WTC11 (cell line): ENCODE measurements at regions of chr5 and their contacts with region 1.

Region 1: DNA sequence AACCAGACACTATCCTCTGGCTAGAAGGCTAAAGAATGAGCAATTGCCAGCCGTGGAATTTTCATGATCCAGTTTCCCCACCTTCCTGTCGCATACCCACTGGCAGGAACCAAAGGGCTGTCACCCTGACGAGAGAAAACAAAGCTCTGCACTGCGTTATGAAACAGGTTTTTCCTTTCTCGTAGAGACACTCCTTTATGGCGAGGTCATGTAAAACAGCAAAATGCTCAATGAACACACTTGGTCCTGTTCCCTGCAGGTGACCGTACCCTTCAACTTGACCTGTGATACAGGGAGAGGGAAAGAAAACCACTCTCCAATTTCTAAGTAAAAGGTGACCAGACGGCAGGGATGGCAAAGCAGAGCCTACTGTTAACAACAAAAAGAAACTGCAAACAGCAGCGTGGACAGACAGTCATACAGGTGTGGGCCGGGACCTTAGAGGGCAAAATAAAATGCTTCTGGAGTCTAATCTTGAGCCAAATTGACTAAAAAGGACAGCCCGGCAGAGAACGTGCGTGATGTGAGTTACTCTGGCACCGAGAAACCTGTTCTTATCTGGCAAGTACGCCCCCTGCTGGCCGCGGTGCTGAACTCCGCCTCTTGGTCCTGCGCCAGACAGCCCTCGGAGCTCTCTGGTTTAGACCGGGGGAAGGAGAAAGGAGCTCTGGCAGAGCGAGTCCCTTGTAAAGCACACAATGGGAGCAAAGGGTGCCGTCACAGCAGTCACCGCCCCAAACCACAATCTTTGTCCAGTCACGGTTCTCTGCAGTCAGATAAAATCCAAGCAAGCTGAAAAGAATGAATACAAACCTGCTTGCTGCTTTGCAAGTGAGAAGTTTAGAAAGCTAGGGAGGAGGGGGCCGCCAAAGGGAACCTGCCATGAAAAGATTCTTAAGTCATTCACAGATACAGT is 98.9 kb downstream of the EFNA5 start:
- DNase-seq: peak; percentile 96
- ATAC-seq: peak; percentile 94
- H3K4me3 Mint-ChIP-seq: peak overlapping the region; percentile 55
- H3K27ac Mint-ChIP-seq: peak overlapping the region; percentile 70; the same call in 1 of the 2 replicates
- H3K4me1 Mint-ChIP-seq: peaks cover 88% of the 10 kb centered on the region
- H3K27me3 Mint-ChIP-seq: no peaks in the 10 kb centered on the region; the same call in 1 of the 2 replicates
- CTCF ChIP-seq: peak; percentile 94

Region 2: DNA sequence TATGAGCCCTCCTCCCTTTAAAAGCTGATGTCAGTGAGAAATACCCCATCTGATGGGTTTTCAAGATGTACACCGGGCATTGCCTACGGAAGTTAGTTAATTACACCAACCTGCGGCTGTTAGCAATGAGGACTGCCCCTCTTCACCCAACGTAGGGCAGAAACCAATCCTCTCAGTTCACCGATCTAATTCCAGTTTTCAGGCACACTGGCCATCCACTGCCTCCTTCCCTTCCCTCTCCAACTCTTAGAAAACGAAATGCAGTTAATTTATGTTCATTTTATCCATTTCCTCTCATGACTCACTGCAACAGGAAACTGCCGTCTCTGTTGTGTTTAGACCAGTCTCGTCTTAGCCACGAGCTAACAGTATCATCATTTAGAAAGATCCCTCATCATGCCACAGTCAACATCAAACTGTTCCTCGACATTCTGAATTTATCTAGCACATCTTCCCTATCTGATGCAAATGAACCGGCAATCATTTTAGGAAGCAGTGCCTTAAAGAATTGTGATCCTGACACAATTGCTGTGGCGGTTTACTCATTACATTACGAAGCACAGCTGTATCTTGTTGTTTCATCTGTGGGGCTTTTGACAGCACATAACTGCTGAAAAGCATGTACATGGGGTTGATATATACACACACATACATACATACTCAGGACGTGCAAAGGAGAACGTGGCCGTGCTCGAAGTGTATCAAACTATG is 69.8 kb before region 1 on chr5:
- CTCF ChIA-PET with region 1: interaction called, 16 read pairs
- POLR2A ChIA-PET with region 1: no interaction called
- DNase-seq: no peak
- ATAC-seq: no peak
- H3K4me3 Mint-ChIP-seq: no peak overlapping the region
- H3K27ac Mint-ChIP-seq: peak overlapping the region; percentile 73
- H3K4me1 Mint-ChIP-seq: peaks cover 70% of the 10 kb centered on the region
- H3K27me3 Mint-ChIP-seq: no peaks in the 10 kb centered on the region
- CTCF ChIP-seq: no peak

Region 3: DNA sequence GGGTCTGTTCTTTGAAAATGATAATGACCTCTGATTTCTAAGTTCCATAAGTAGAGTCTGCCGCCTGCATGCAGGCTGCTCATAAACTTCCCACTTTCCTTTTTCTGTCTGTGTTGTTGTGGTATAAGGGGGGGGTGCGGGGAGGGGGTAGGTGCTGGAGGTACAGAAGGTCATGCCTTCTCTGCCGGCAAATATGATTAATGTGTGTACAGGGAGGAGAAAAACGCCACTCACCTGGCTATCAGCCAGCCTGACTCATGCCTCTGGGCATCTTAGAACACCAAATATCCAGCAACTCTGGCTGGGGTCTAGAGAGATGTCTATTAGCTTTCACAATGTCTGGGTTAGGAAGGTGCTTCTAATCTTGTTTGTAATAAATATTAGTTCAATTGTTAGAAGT is 29.5 kb before region 1 on chr5:
- CTCF ChIA-PET with region 1: interaction called, 16 read pairs
- POLR2A ChIA-PET with region 1: interaction called, 8 read pairs
- DNase-seq: no peak
- ATAC-seq: no peak
- H3K4me3 Mint-ChIP-seq: no peak overlapping the region
- H3K27ac Mint-ChIP-seq: no peak overlapping the region
- H3K4me1 Mint-ChIP-seq: peaks cover 66% of the 10 kb centered on the region
- H3K27me3 Mint-ChIP-seq: peaks cover 44% of the 10 kb centered on the region
- CTCF ChIP-seq: no peak

Region 4: GRCh38 chr5:107594253-107595045 is 22.6 kb after region 1 on chr5:
- CTCF ChIA-PET with region 1: interaction called, 32 read pairs
- POLR2A ChIA-PET with region 1: no interaction called
- DNase-seq: no peak
- ATAC-seq: no peak
- H3K4me3 Mint-ChIP-seq: no peak overlapping the region
- H3K27ac Mint-ChIP-seq: 0 out of 2 replicates have a peak overlapping the region, but pooled peaks have one; percentile 22
- H3K4me1 Mint-ChIP-seq: peaks cover 28% of the 10 kb centered on the region
- H3K27me3 Mint-ChIP-seq: no peaks in the 10 kb centered on the region
- CTCF ChIP-seq: no peak

Region 5: GRCh38 chr5:107607671-107608345 is 35.9 kb after region 1 on chr5:
- CTCF ChIA-PET with region 1: interaction called, 10 read pairs
- POLR2A ChIA-PET with region 1: no interaction called
- DNase-seq: no peak
- ATAC-seq: no peak
- H3K4me3 Mint-ChIP-seq: no peak overlapping the region
- H3K27ac Mint-ChIP-seq: peak overlapping the region; percentile 2
- H3K4me1 Mint-ChIP-seq: peaks cover 66% of the 10 kb centered on the region
- H3K27me3 Mint-ChIP-seq: no peaks in the 10 kb centered on the region
- CTCF ChIP-seq: no peak

Region 6: DNA sequence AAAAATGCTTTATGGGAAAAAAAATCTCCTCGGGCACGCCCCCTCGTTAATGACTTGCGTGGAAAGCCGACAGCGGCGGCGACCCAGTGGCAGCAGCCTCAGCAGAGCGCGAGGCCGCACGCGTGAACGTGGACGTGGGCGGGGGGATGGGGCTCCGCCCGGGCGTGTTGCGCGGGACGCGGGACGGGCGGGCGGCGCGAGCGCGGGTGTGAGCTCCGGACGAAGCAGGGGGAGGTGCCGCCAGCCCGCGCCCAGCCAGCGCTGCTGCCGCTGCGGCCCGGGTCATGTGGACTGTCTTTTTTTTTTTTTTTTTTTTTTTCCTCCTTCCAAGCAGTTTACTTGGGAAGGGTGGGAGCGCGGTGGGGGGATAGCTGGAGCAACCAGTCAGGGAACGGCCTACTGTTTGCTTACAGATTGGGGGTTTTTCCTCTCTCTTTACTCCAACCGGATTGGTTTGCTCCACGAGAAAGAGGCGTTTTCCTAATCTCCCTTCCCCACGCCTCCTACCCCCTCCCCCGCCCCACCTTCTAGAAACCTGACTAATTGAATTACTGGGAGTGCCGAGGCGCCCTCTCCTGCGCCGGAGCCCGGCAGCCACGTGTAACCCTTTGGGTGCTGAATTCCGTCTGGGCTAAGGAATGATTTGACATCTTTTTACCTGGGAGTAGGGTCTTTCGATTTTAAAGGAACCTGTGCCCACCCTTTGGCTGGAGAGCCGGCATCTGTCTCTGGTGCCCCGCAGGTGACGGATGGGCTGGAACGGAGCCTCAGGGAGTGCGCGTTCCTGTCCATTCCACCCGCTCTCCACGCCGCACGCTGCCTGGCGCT is 100.5 kb after region 1 on chr5:
- CTCF ChIA-PET with region 1: interaction called, 8 read pairs
- POLR2A ChIA-PET with region 1: interaction called, 12 read pairs
- DNase-seq: peak; percentile 87
- ATAC-seq: peak; percentile 78
- H3K4me3 Mint-ChIP-seq: peak overlapping the region; percentile 92
- H3K27ac Mint-ChIP-seq: peak overlapping the region; percentile 87
- H3K4me1 Mint-ChIP-seq: peaks cover 33% of the 10 kb centered on the region
- H3K27me3 Mint-ChIP-seq: peaks cover 34% of the 10 kb centered on the region
- CTCF ChIP-seq: no peak

Region 7: DNA sequence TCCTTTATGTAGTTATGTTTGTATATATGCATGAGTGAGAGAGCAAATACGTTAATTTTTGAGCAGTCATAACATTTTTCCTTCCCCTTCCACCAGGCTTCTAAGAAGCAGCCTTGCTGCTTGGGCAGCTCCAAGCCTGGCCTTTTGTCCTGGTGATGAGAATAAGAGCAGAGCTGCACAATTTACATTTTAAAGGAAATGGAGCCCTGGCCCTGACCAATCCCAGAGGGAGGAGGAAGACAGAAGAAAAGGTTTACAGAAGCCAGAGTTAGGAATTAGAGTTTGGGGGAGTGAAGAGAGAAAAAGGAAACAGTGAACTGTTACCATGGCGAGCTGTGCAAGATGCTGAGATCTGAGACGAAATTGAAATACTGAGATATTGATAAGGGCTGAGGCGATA is 124.2 kb after region 1 on chr5:
- CTCF ChIA-PET with region 1: no interaction called
- POLR2A ChIA-PET with region 1: no interaction called
- DNase-seq: peak; percentile 36
- ATAC-seq: peak; percentile 100
- H3K4me3 Mint-ChIP-seq: peak overlapping the region; percentile 27
- H3K27ac Mint-ChIP-seq: peak overlapping the region; percentile 59
- H3K4me1 Mint-ChIP-seq: peaks cover 11% of the 10 kb centered on the region
- H3K27me3 Mint-ChIP-seq: no peaks in the 10 kb centered on the region
- CTCF ChIP-seq: no peak